Lower leg skin (tissue), 4 donors: ENCODE measurements at regions of chr3 and their contacts with region 1.

Region 1: DNA sequence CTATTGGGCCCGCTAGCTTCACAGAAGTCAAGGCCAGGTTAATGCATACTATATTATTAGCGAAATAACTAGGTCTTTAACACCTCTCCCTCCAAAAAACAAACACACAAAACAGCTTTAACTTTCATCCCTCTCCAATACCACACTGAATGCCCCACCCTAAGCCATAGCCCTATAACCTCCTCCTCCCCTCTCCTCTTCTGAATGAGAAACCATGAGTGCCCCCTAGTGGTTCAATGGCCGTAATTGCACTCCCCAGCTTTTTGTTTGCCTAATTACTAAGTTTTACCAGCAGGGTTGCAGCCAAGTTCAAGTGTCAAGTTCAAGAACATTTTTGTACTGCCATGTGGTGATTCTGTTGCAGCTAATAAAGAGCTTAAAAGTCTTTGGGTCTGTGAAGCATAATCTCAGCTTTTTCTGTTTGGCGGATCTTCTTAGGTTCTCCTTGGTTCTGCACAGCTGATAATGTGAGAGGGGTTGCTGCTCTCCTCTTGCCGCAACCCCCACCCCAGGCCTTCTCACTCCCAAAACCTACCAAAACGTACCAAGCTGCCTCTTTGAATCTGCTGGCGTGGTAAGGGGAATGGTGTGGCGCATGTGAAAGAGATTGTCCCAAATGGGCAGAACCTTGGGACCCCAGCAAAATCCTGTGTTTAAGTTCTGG is 57.9 kb downstream of the RPL22L1 start:
- DNase-seq: peak; percentile 77 to 93
- H3K4me3 ChIP-seq: no peak overlapping the region
- CTCF ChIP-seq: peak in 1 of 3 donors; percentile 95
- POLR2A ChIP-seq: no peak

Region 2: DNA sequence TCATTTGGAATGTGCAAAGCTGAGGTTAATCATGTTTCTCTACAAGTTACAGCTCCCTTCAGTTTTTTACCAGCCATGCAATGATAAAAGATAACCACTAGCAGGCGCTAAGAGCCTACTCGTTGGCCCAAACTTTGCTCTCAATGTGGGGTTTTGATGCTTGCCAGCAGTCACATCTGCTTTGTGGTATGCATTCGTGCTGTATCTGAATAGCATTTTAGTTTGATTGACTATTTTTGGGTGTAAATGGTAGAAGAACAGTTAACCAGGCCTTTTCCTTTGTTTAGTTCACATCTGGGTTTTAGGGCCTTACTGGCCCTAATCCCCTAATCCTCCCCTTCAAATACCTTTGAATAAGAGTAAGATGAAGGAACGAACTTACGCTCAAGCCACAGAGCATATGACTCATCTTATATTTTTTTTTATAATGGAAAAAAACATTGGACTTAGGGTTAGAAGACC is 397.8 kb before region 1 on chr3:
- intact Hi-C with region 1: loop called (anchors 5 kb)
- DNase-seq: peak in 1 of 2 donors; percentile 32
- H3K4me3 ChIP-seq: no peak overlapping the region
- CTCF ChIP-seq: peak in 1 of 3 donors; percentile 87
- POLR2A ChIP-seq: no peak

Region 3: DNA sequence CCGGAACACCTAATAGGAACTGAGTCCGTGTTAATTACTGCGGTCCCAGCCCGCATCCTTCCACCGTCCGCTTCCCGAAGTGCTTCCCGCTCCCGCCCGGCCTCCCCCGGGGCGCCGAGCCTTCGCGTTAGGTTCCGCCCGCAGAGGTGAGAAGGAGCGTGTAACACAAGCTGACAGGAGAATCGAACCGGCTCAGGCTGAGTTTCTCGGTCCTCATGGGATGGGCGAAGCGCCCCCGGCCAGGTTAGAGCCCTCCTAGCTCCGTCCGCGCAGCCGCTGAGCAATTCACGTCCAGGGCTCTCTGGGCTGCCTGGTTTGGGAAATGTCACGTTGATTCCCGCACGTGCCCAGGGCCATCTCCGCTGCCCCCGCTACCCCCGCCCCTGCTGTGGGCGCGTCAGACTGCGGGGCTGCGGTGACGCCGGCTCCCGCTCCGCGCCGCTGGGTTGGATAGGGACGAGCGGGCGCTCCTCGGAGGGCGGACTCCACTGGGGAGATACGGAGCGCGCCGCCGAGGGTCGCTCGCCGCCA is 392.4 kb before region 1 on chr3:
- intact Hi-C with region 1: loop called (anchors 5 kb)
- DNase-seq: peak in 1 of 2 donors; percentile 86
- H3K4me3 ChIP-seq: no peak overlapping the region
- CTCF ChIP-seq: no peak
- POLR2A ChIP-seq: no peak